CD14-positive monocyte (primary cell): ENCODE measurements at regions of chr11 and their contacts with region 1.

Region 1: GRCh38 chr11:34585735-34586487 is 35.0 kb upstream of the EHF start:
- DNase-seq: peak; percentile 26 to 68 (median 55)
- H3K4me3 ChIP-seq: no peak overlapping the region
- H3K4me3 Mint-ChIP-seq: peak overlapping the region in 1 of 2 donors; percentile 43
- H3K27ac ChIP-seq: peak overlapping the region in 1 of 2 donors; percentile 20
- H3K27ac Mint-ChIP-seq: peak overlapping the region; percentile 0 to 87 (median 73)
- H3K4me1 ChIP-seq: peaks cover 21 to 23% of the 10 kb centered on the region in 2 donors
- H3K4me1 Mint-ChIP-seq: peaks cover 31% of the 10 kb centered on the region
- H3K27me3 ChIP-seq: no peaks in the 10 kb centered on the region
- H3K27me3 Mint-ChIP-seq: peaks cover 0 to 5% (median 3%) of the 10 kb centered on the region in 3 donors
- CTCF ChIP-seq: peak; percentile 83

Region 2: DNA sequence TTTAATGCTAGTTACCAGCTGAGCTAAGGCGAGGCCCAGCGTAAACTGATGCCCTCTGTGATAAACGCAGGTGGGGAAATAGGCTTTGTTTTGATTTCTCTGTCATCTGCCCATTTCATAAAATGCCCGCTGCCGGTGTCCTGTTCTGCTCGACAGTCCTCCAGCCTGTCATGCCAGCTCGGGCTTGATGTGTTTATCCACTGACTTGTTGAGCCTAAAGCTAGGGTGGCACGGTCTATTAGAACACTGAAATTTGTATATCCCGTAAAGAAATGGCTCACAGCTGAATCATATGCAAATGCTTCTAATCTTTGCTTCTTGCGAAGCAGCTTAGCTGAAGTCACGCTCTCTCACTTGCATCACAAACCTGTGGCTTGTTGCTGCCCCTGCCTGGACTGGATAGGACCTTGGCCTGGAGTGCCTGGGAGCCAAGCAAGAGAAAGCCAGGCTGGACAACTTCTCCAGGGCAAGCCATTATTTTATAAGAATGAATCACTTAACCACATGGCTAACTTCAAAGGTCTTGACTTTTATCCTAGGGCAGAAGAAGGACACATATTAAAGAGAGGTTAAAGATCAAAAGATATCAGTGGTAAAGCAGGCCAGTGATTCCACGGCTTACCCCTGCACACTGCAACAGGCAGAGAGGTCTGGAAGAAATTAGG is 68.0 kb after region 1 on chr11:
- intact Hi-C with region 1: loop called in 1 of 2 experiments (anchors 10 kb)
- DNase-seq: peak; percentile 73 to 91 (median 84)
- H3K4me3 ChIP-seq: no peak overlapping the region
- H3K4me3 Mint-ChIP-seq: peak overlapping the region in 1 of 2 donors; percentile 33
- H3K27ac ChIP-seq: peak overlapping the region; percentile 48 to 80
- H3K27ac Mint-ChIP-seq: peak overlapping the region; percentile 81 to 95 (median 91)
- H3K4me1 ChIP-seq: peaks cover 45 to 51% of the 10 kb centered on the region in 2 donors
- H3K4me1 Mint-ChIP-seq: peaks cover 53% of the 10 kb centered on the region
- H3K27me3 ChIP-seq: no peaks in the 10 kb centered on the region
- H3K27me3 Mint-ChIP-seq: peaks cover 0 to 3% (median 0%) of the 10 kb centered on the region in 3 donors
- CTCF ChIP-seq: no peak

Region 3: GRCh38 chr11:34890812-34891211 is 304.9 kb after region 1 on chr11:
- intact Hi-C with region 1: loop called (anchors 5 to 10 kb)
- DNase-seq: peak in 2 of 3 donors; percentile 10 to 31
- H3K4me3 ChIP-seq: no peak overlapping the region
- H3K4me3 Mint-ChIP-seq: no peak overlapping the region
- H3K27ac ChIP-seq: no peak overlapping the region
- H3K27ac Mint-ChIP-seq: no peak overlapping the region
- H3K4me1 ChIP-seq: no peaks in the 10 kb centered on the region
- H3K4me1 Mint-ChIP-seq: no peaks in the 10 kb centered on the region
- H3K27me3 ChIP-seq: no peaks in the 10 kb centered on the region
- H3K27me3 Mint-ChIP-seq: no peaks in the 10 kb centered on the region
- CTCF ChIP-seq: peak; percentile 35

Region 4: DNA sequence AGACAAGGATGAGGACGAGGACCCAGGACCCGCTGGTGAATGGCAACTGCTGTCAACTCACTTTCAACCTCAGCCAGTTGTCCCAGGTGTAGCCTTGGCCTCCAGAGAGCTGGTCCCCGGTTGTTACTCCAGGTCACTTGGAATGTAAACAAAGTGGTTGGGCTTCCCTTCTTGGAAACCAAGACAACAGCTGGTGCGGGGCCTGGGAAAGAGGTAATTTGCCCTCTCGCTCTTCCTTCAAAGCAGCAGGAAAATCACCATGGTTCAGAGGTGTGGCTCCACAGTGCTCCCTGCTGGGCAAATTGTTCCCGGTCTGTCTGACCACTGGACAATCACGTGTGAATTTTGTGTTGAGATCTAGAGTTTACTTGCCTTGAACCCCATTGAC is 818.5 kb after region 1 on chr11:
- intact Hi-C with region 1: loop called in 1 of 2 experiments (anchors 10 kb)
- DNase-seq: peak; percentile 23 to 49 (median 43)
- H3K4me3 ChIP-seq: no peak overlapping the region
- H3K4me3 Mint-ChIP-seq: peak overlapping the region in 1 of 2 donors; percentile 80
- H3K27ac ChIP-seq: no peak overlapping the region
- H3K27ac Mint-ChIP-seq: no peak overlapping the region
- H3K4me1 ChIP-seq: no peaks in the 10 kb centered on the region
- H3K4me1 Mint-ChIP-seq: peaks cover 2% of the 10 kb centered on the region
- H3K27me3 ChIP-seq: peaks cover 2 to 6% of the 10 kb centered on the region in 2 donors
- H3K27me3 Mint-ChIP-seq: peaks cover 2 to 3% (median 2%) of the 10 kb centered on the region in 3 donors
- CTCF ChIP-seq: peak; percentile 75